ENCODE measurements at regions of chr4 and their contacts with region 1.

Region 1: DNA sequence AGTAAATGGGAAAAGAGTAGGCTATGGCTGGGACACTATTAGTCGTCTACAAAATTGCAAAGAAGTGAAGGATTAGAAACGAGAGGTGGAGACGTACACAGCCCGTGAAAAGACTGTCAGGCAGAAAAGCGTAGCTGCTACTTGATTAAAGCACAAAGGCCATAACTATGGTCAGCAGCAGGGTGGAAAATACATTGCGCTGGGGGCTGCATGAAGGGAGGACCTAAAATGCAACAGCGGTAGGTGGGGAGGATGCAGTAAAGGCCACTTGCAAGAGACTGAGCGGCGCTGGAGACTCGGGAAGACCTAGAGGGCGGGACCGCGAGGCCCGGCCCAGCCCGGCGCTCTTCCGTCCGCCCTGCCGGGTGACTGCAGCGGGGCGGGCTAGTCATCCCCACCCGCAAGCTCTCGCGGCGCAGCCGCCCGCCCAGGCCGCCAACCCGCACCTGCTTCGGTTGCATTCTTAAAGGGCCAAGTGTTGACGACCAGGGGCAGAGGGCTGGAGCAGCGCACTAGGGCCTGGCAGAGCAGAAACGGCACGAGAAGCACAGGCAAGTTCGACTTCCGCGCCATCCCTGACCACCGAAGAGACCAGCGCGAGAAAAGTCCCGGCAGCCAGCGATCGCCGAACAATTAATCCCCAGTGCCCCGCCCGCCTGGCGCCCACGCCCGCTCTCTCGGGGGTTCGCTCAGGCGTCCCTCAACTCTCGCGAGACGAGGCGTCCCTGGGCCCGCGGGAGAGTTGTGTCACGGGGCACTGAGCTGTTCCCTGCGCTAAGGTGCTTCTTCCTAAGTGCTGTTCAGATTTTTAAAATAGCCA is at the start of gene AGA:
- H3K4me3 Mint-ChIP-seq: peak within 1 kb of the TSS; percentile 90
- H3K27ac Mint-ChIP-seq: peak within 1 kb of the TSS; percentile 98
- H3K4me1 Mint-ChIP-seq: peaks cover 25% of the 10 kb centered on the region
- H3K27me3 Mint-ChIP-seq: no peaks in the 10 kb centered on the region

Region 2: DNA sequence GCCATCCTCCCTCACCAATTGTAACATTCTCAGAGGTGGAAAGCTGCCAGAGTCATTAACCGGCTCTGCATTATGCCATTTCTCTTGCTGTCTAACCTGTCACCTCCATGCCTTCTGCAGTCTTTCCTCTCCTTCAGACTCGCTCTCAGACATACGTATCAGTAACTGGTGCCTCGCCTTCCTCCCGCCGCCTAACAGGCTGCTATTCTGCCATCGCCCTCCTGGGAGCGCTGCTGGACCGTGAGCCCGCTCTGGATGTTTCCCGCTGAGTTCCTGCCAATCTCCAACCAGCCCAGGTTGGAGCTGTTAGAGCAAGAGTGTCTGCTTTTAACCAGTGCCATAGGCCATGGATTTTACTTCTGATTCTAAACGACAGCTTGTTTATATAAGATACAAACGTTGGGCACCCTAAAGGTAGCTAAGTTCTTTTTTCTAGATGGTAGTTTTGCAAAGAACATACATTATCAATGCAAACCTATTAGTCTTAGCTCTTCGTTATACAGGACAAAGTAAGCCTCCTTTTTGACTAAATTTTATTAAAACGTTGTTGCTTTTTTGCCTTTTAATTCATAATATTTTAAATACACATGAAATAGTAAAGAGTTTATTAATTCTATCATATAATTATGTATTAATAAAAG is 191.8 kb before region 1 on chr4:
- intact Hi-C with region 1: loop called (anchors 5 kb)
- H3K4me3 Mint-ChIP-seq: no peak overlapping the region
- H3K27ac Mint-ChIP-seq: no peak overlapping the region
- H3K4me1 Mint-ChIP-seq: peaks cover 13% of the 10 kb centered on the region
- H3K27me3 Mint-ChIP-seq: peaks cover 7% of the 10 kb centered on the region

Region 3: DNA sequence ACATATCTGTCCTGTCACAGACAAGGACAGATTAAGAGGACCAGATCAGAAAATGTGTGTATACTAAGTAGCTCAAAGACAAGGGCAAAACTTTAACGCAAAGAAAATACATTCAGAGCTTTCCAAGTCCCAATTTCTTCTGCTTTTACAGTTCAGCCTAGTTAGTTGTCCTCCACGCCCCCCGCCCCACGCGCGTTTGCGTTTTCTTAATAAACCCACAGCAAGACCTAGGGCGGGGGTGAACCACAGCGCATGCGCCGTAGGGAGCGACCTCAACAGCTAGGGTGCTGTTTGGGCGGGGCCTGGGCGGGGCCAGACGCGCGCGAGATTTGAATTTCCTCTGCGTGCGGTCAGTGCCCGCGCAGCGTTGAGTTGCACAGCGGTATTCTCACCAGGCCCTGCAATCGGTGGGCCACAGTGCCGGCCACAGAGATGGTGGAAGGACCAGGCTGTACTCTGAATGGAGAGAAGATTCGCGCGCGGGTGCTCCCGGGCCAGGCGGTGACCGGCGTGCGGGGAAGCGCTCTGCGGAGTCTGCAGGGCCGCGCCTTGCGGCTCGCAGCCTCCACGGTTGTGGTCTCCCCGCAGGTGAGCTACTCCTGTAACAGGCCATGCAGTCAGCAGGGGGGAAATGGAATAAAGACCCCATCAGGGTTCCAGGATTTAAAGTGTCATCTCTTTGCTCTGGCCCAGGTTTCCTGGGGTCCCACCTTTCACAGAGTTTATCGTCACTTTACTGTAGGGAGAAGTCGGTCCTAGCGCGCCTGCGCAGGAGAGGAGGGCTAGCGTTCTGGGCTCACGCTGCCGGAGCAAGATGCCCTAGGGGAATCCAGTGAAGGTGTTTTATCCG is 132.3 kb before region 1 on chr4 and contains the start of gene NEIL3:
- intact Hi-C with region 1: loop called (anchors 1 kb)
- H3K4me3 Mint-ChIP-seq: peak within 1 kb of the TSS; percentile 98
- H3K27ac Mint-ChIP-seq: peak within 1 kb of the TSS; percentile 79
- H3K4me1 Mint-ChIP-seq: peaks cover 26% of the 10 kb centered on the region
- H3K27me3 Mint-ChIP-seq: no peaks in the 10 kb centered on the region